Ovary (tissue), 10 donors: ENCODE measurements at regions of chr19 and their contacts with region 1.

Region 1: GRCh38 chr19:9329999-9330398 is 6.0 kb downstream of the ZNF559 start:
- DNase-seq: no peak
- H3K4me3 ChIP-seq: no peak overlapping the region
- H3K27ac ChIP-seq: no peak overlapping the region
- H3K4me1 ChIP-seq: no peaks in the 10 kb centered on the region
- H3K27me3 ChIP-seq: no peaks in the 10 kb centered on the region
- CTCF ChIP-seq: no peak
- EP300 ChIP-seq: no peak
- POLR2A ChIP-seq: no peak

Region 2: DNA sequence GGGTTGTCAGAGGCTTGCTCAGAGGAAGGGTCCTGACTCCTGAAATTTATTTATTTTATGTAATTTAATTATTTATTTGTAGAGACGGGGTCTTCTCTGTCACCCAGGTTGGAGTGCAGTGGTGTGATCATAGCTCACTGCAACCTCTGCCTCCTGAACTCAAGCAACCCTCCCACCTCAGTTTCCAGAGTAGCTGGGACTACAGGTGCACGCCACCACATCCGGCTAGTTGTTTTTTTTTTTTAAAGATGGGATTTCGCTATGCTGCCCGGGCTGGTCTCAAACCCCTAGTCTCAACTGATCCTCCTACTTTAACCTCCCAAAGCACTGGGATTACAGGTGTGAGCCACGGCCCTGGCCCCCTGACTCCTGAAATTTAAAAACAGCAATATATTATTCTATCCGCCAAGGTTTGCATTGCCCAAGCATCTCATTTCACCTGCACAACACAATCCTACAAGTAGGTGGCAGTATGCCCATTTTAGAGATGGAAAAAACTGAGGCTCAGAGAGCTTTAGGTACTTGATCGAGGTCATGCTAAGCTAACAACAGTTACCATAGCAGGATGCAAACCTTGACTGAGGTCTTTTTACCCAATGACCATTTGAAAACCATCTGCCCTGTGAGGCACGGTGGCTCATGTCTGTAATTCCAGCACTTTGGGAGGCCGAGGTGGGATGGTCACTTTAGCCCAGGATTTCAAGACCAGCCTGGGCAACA is 1963.1 kb before region 1 on chr19:
- intact Hi-C with region 1: loop called in 1 of 4 experiments (anchors 5 kb)
- DNase-seq: no peak
- H3K4me3 ChIP-seq: no peak overlapping the region
- H3K27ac ChIP-seq: no peak overlapping the region
- H3K4me1 ChIP-seq: no peaks in the 10 kb centered on the region
- H3K27me3 ChIP-seq: no peaks in the 10 kb centered on the region
- CTCF ChIP-seq: no peak
- EP300 ChIP-seq: no peak
- POLR2A ChIP-seq: no peak

Region 3: GRCh38 chr19:9353011-9353410 is 23.0 kb after region 1 on chr19:
- intact Hi-C with region 1: no loop called
- DNase-seq: no peak
- H3K4me3 ChIP-seq: no peak overlapping the region
- H3K27ac ChIP-seq: no peak overlapping the region
- H3K4me1 ChIP-seq: no peaks in the 10 kb centered on the region
- H3K27me3 ChIP-seq: no peaks in the 10 kb centered on the region
- CTCF ChIP-seq: no peak
- EP300 ChIP-seq: no peak
- POLR2A ChIP-seq: no peak

Region 4: GRCh38 chr19:11191273-11191755 is 1861.3 kb after region 1 on chr19:
- intact Hi-C with region 1: no loop called
- DNase-seq: peak; percentile 45 to 64 (median 54)
- H3K4me3 ChIP-seq: no peak overlapping the region
- H3K27ac ChIP-seq: peak overlapping the region in 1 of 2 donors; percentile 47
- H3K4me1 ChIP-seq: peaks cover 31% of the 10 kb centered on the region
- H3K27me3 ChIP-seq: no peaks in the 10 kb centered on the region
- CTCF ChIP-seq: no peak
- EP300 ChIP-seq: no peak
- POLR2A ChIP-seq: no peak